ENCODE measurements at regions of chr2 and their contacts with region 1.

Region 1: DNA sequence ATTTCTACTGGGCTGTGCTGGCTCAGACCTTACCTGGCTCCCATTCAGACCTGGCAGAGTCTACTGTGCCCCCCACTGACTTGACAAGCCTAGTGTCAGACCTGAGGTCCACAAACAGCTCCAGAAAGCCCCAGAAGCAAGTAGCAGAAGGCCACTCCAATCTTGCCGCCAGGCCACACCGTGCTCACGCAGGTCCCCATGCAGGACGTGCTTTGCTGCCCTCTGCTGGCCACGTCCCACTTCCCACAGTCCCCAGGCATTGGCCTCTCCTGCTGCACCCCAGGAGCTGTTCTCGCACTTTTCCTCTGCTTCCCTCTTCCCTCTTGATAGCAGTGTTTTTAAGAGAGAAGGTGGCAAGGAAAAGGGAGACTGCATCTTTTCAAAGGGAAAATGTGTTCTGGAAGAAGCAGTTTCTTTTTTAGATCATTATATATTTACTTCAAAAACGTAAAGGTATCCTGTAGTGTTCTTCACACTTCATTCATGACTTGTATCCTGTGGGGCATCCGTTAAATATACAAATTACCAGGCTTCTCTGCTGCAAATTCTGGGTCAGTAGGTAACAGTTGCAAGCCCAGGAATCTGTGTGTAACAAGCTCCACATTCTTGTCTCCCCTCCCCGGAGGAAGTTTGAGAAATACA is 81.4 kb upstream of the PAPOLG start:
- DNase-seq: peak; percentile 53
- ATAC-seq: peak; percentile 100
- H3K4me3 ChIP-seq: no peak overlapping the region
- H3K27ac ChIP-seq: no peak overlapping the region
- H3K4me1 ChIP-seq: no peaks in the 10 kb centered on the region
- H3K27me3 ChIP-seq: peaks cover 19% of the 10 kb centered on the region
- CTCF ChIP-seq: peak; percentile 98

Region 2: DNA sequence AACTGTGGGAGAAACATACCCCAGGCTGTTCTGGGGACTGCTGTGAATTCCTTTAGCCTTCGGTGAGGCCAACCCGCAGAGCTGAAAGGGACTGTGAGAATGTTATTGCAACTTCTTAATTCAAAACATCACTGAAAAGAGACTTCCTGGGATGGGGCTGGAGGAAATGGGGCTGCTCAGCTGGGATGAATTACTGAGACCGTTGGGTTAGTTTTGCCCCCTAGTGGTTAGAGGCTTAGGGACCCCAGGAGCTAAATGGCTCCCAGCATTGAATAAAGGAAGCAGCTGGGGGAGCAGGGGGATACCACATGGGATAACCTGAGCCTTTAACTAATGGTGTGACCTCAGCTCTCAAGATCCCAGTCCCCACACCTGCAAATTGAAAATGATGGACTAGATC is 1492.4 kb before region 1 on chr2:
- CTCF ChIA-PET with region 1: no interaction called
- POLR2A ChIA-PET with region 1: no interaction called
- in situ Hi-C with region 1: no loop called
- intact Hi-C with region 1: no loop called
- DNase-seq: no peak
- ATAC-seq: peak; percentile 60; the same call in 1 of the 2 replicates
- H3K4me3 ChIP-seq: no peak overlapping the region
- H3K27ac ChIP-seq: no peak overlapping the region
- H3K4me1 ChIP-seq: no peaks in the 10 kb centered on the region
- H3K27me3 ChIP-seq: no peaks in the 10 kb centered on the region
- CTCF ChIP-seq: peak; percentile 63

Region 3: GRCh38 chr2:59896499-59897245 is 778.0 kb before region 1 on chr2:
- CTCF ChIA-PET with region 1: no interaction called
- POLR2A ChIA-PET with region 1: no interaction called
- in situ Hi-C with region 1: no loop called
- intact Hi-C with region 1: no loop called
- DNase-seq: no peak
- ATAC-seq: no peak
- H3K4me3 ChIP-seq: no peak overlapping the region
- H3K27ac ChIP-seq: no peak overlapping the region
- H3K4me1 ChIP-seq: no peaks in the 10 kb centered on the region
- H3K27me3 ChIP-seq: no peaks in the 10 kb centered on the region; the same call in 1 of the 2 replicates
- CTCF ChIP-seq: no peak

Region 4: GRCh38 chr2:60560734-60561644 is 113.7 kb before region 1 on chr2:
- CTCF ChIA-PET with region 1: interaction called, 5 read pairs
- POLR2A ChIA-PET with region 1: no interaction called
- in situ Hi-C with region 1: no loop called
- intact Hi-C with region 1: loop called (anchors 10 kb)
- DNase-seq: no peak
- ATAC-seq: peak; percentile 89
- H3K4me3 ChIP-seq: no peak overlapping the region
- H3K27ac ChIP-seq: no peak overlapping the region
- H3K4me1 ChIP-seq: peaks cover 6% of the 10 kb centered on the region; the same call in 1 of the 2 replicates
- H3K27me3 ChIP-seq: peaks cover 59% of the 10 kb centered on the region
- CTCF ChIP-seq: peak; percentile 79

Region 5: DNA sequence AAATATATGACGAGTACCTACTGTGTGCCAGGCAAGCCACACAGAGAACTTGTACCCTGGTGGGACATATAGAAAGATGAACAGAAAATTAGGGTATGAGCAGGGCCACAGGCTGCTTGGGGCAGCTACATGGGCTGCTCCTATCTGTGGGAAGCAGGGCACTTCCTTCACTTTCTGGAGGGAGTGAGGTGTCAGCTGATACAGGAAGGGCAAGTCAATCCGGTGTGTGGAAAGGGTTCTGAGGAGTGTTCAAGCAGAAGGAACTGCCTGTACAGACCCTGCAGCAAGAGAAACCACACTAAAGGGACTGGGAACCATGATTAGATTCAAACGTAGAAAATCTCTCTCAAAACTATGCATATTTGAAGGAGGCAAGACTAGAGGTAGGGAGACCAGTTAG is 62.6 kb before region 1 on chr2:
- CTCF ChIA-PET with region 1: interaction called, 14 read pairs
- POLR2A ChIA-PET with region 1: no interaction called
- in situ Hi-C with region 1: no loop called
- intact Hi-C with region 1: no loop called
- DNase-seq: no peak
- ATAC-seq: no peak
- H3K4me3 ChIP-seq: no peak overlapping the region
- H3K27ac ChIP-seq: no peak overlapping the region
- H3K4me1 ChIP-seq: no peaks in the 10 kb centered on the region
- H3K27me3 ChIP-seq: peaks cover 10% of the 10 kb centered on the region
- CTCF ChIP-seq: no peak